Adrenal gland (tissue), 19 donors: ENCODE measurements at regions of chr2 and their contacts with region 1.

Region 1: GRCh38 chr2:73099486-73099885 is 13.3 kb downstream of the RAB11FIP5 start:
- DNase-seq: no peak
- H3K4me3 ChIP-seq: no peak overlapping the region
- H3K27ac ChIP-seq: no peak overlapping the region
- H3K4me1 ChIP-seq: peaks cover 0 to 17% of the 10 kb centered on the region in 2 donors
- H3K27me3 ChIP-seq: no peaks in the 10 kb centered on the region
- CTCF ChIP-seq: no peak
- POLR2A ChIP-seq: no peak

Region 2: GRCh38 chr2:72883356-72883962 is 216.0 kb before region 1 on chr2:
- intact Hi-C with region 1: no loop called
- DNase-seq: peak in 4 of 7 donors; percentile 57 to 66 (median 60)
- H3K4me3 ChIP-seq: no peak overlapping the region
- H3K27ac ChIP-seq: no peak overlapping the region
- H3K4me1 ChIP-seq: peaks cover 10 to 15% of the 10 kb centered on the region in 2 donors
- H3K27me3 ChIP-seq: no peaks in the 10 kb centered on the region
- CTCF ChIP-seq: no peak
- POLR2A ChIP-seq: no peak

Region 3: GRCh38 chr2:73142937-73143336 is 43.5 kb after region 1 on chr2:
- intact Hi-C with region 1: loop called in 1 of 2 experiments (anchors 5 kb)
- DNase-seq: no peak
- H3K4me3 ChIP-seq: no peak overlapping the region
- H3K27ac ChIP-seq: no peak overlapping the region
- H3K4me1 ChIP-seq: no peaks in the 10 kb centered on the region
- H3K27me3 ChIP-seq: no peaks in the 10 kb centered on the region
- CTCF ChIP-seq: no peak
- POLR2A ChIP-seq: no peak

Region 4: GRCh38 chr2:73176881-73177644 is 77.6 kb after region 1 on chr2:
- intact Hi-C with region 1: no loop called
- DNase-seq: peak; percentile 85 to 95 (median 89)
- H3K4me3 ChIP-seq: peak overlapping the region in 3 of 4 donors; percentile 23 to 61 (median 41)
- H3K27ac ChIP-seq: peak overlapping the region in 2 of 5 donors; percentile 50 to 79
- H3K4me1 ChIP-seq: peaks cover 17 to 18% of the 10 kb centered on the region in 2 donors
- H3K27me3 ChIP-seq: peaks cover 3% of the 10 kb centered on the region
- CTCF ChIP-seq: peak; percentile 95 to 98 (median 97)
- POLR2A ChIP-seq: no peak